ENCODE measurements at regions of chr3 and their contacts with region 1.

Region 1: GRCh38 chr3:128663151-128663550 is 12.5 kb upstream of the RPN1 start:
- DNase-seq: no peak
- ATAC-seq: no peak
- H3K4me3 ChIP-seq: no peak overlapping the region
- H3K27ac ChIP-seq: no peak overlapping the region
- H3K4me1 ChIP-seq: no peaks in the 10 kb centered on the region
- H3K27me3 ChIP-seq: no peaks in the 10 kb centered on the region
- CTCF ChIP-seq: no peak
- POLR2A ChIP-seq: no peak

Region 2: GRCh38 chr3:128572644-128573105 is 90.5 kb before region 1 on chr3:
- intact Hi-C with region 1: no loop called
- DNase-seq: no peak
- ATAC-seq: no peak
- H3K4me3 ChIP-seq: no peak overlapping the region
- H3K27ac ChIP-seq: peak overlapping the region in 1 of 12 donors; percentile 76
- H3K4me1 ChIP-seq: peaks cover 0 to 33% (median 16%) of the 10 kb centered on the region in 12 donors
- H3K27me3 ChIP-seq: peaks cover 0 to 17% (median 0%) of the 10 kb centered on the region in 9 donors
- CTCF ChIP-seq: peak in 4 of 12 donors; percentile 20 to 26 (median 24)
- POLR2A ChIP-seq: no peak

Region 3: DNA sequence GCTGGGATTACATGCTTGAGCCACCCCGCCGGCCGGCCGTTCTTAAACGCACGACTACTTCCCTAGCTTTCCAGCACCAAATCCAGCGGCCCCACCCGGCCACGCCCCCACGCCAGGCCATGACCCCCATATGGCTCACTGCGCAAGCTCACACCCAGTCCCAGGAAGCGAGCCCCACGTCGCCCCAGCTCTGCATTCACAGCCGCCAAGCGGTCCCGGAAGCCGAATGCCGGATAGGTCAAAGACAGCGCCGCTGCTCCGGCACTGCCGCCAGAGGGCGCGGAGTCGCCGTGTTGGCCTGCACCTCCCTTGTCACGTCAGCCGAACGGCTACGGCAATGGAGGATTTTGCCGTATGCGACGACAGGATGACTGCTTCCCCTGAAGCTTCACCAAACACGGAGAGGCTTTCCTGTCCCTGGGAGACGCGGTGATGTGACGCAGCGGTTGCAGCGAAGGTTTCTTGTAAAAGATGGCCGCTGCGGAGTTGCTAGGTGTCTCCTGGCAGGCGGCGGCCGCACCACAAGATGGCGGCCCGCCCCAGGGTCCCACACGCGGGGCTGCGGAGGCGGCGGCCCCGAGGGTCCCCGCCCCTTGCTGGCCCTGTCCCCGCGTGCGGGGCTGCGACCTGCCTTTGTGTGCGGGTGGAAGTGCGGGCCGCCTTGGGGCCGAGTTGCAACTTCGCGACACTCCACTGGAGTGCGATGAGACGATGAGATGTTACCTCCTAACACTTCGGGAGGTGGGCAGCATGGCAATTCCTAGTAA is 17.6 kb after region 1 on chr3:
- intact Hi-C with region 1: loop called in 1 of 10 experiments (anchors 1 kb)
- DNase-seq: peak; percentile 99 to 100 (median 100)
- ATAC-seq: peak; percentile 100
- H3K4me3 ChIP-seq: peak overlapping the region; percentile 45 to 82 (median 70)
- H3K27ac ChIP-seq: peak overlapping the region; percentile 92 to 98 (median 96)
- H3K4me1 ChIP-seq: peaks cover 0 to 24% (median 7%) of the 10 kb centered on the region in 12 donors
- H3K27me3 ChIP-seq: no peaks in the 10 kb centered on the region
- CTCF ChIP-seq: peak; percentile 94 to 99 (median 96)
- POLR2A ChIP-seq: peak in 1 of 2 donors; percentile 68

Region 4: DNA sequence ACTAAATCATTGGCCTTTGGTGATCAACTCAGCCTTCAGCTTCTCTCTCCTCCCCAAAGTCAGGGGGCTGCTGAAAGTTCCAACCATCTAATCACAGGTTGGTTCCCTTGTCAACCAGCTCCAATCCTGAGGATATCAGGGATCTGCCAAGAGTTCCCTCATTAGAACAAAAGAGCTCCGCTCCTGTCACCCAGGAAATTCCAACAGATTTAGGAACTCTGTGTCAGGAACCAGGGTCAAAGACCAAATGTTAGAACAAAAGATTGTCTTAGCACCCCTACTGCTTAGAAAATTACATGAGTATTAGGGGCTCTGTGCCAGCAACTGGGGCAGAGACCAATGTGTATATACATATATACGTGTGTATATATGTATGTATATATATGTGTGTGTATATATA is 30.5 kb after region 1 on chr3:
- intact Hi-C with region 1: loop called in 1 of 10 experiments (anchors 2 kb)
- DNase-seq: no peak
- ATAC-seq: no peak
- H3K4me3 ChIP-seq: no peak overlapping the region
- H3K27ac ChIP-seq: no peak overlapping the region
- H3K4me1 ChIP-seq: peaks cover 0 to 7% (median 0%) of the 10 kb centered on the region in 12 donors
- H3K27me3 ChIP-seq: no peaks in the 10 kb centered on the region
- CTCF ChIP-seq: no peak
- POLR2A ChIP-seq: no peak